ENCODE measurements at regions of chr7 and their contacts with region 1.

Region 1: GRCh38 chr7:140397784-140398750 is at the start of gene SLC37A3:
- DNase-seq: peak; percentile 75 to 92
- H3K4me3 ChIP-seq: peak within 1 kb of the TSS; percentile 90
- H3K27ac ChIP-seq: 0 out of 2 replicates have a peak within 1 kb of the TSS, but pooled peaks have one; percentile 7
- H3K4me1 ChIP-seq: peaks cover 31% of the 10 kb centered on the region
- H3K27me3 ChIP-seq: no peaks in the 10 kb centered on the region
- CTCF ChIP-seq: no peak
- total RNA-seq, gene SLC37A3: 42.4 and 54.8 TPM in 2 replicates

Region 2: GRCh38 chr7:140260352-140261104 is 137.5 kb before region 1 on chr7:
- CTCF ChIA-PET with region 1: no interaction called
- POLR2A ChIA-PET with region 1: no interaction called
- intact Hi-C with region 1: no loop called
- DNase-seq: no peak
- H3K4me3 ChIP-seq: no peak overlapping the region
- H3K27ac ChIP-seq: no peak overlapping the region
- H3K4me1 ChIP-seq: no peaks in the 10 kb centered on the region
- H3K27me3 ChIP-seq: no peaks in the 10 kb centered on the region
- CTCF ChIP-seq: no peak

Region 3: DNA sequence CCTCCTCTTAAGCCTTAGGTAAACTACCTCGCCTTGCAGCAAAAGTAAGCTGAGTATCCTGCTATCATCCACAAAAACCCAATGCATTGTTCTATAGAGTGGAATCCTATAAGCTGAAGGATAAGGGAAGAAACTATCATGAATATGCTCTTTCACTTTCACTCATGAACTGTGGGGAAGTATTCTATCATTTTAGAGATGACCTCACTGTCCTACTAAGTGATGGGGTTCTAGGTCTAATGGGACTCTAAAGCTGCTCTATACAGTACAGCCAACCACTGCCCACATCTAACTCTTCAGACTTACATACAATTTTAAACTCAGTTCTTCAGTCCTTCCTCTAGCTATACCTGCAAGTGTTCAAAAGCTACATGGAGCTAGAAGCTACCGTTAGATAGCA is 65.0 kb after region 1 on chr7:
- CTCF ChIA-PET with region 1: no interaction called
- POLR2A ChIA-PET with region 1: interaction called, 21 read pairs
- intact Hi-C with region 1: no loop called
- DNase-seq: no peak
- H3K4me3 ChIP-seq: no peak overlapping the region
- H3K27ac ChIP-seq: no peak overlapping the region
- H3K4me1 ChIP-seq: no peaks in the 10 kb centered on the region
- H3K27me3 ChIP-seq: no peaks in the 10 kb centered on the region
- CTCF ChIP-seq: no peak

Measured in PC-9 (cell line).